B cell (primary cell): ENCODE measurements at regions of chr3 and their contacts with region 1.

Region 1: GRCh38 chr3:11335056-11335608 is 62.9 kb downstream of the ATG7 start:
- DNase-seq: peak; percentile 69
- ATAC-seq: peak; percentile 71
- H3K4me3 ChIP-seq: no peak overlapping the region
- H3K4me3 Mint-ChIP-seq: no peak overlapping the region
- H3K27ac ChIP-seq: no peak overlapping the region
- H3K27ac Mint-ChIP-seq: no peak overlapping the region
- H3K4me1 ChIP-seq: no peaks in the 10 kb centered on the region
- H3K4me1 Mint-ChIP-seq: no peaks in the 10 kb centered on the region
- H3K27me3 ChIP-seq: no peaks in the 10 kb centered on the region
- H3K27me3 Mint-ChIP-seq: no peaks in the 10 kb centered on the region
- CTCF ChIP-seq: peak; percentile 74

Region 2: DNA sequence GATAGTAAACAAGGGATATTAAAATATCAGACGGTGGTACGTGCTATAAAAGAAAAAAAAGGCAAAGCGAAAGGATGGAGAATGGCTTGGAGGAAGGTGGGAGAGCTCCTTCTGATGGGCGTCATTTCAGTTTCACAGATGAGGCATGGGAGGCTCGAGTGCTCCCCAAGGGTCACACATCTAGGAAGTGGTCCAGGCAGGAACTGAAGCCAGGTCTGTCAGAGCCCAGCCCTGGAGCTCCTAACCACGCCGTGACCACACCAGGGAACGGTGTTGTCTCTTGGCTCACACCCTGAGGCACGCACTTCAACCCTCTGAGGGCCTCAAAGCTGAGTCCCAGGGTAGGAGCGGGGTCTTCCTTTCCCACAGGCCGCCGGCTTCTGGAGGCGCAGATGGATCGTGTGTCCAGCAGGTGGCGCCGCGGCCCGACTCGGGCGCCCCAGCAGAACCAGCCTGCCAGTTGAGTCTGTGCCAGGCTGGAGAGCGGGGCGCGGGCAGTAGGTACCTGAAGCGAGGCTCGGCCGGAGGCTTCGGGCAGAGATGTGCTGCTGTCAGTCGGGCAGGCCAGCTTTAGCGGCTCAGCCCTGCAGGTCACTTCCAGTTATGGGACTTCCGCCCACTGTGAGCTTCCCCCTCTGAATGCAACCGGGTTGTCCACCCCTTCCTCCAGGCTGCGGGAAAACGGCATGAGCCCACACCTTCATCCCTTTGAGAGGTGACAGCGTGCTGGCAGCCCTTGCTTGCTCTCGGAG is 274.5 kb before region 1 on chr3:
- CTCF ChIA-PET with region 1: interaction called, 40 read pairs
- POLR2A ChIA-PET with region 1: no interaction called
- intact Hi-C with region 1: no loop called
- DNase-seq: peak; percentile 67
- ATAC-seq: peak; percentile 56
- H3K4me3 ChIP-seq: no peak overlapping the region
- H3K4me3 Mint-ChIP-seq: no peak overlapping the region
- H3K27ac ChIP-seq: no peak overlapping the region
- H3K27ac Mint-ChIP-seq: no peak overlapping the region
- H3K4me1 ChIP-seq: peaks cover 0 to 6% of the 10 kb centered on the region in 2 donors
- H3K4me1 Mint-ChIP-seq: peaks cover 4% of the 10 kb centered on the region
- H3K27me3 ChIP-seq: peaks cover 0 to 18% (median 8%) of the 10 kb centered on the region in 4 experiments
- H3K27me3 Mint-ChIP-seq: peaks cover 39% of the 10 kb centered on the region
- CTCF ChIP-seq: peak; percentile 83

Region 3: DNA sequence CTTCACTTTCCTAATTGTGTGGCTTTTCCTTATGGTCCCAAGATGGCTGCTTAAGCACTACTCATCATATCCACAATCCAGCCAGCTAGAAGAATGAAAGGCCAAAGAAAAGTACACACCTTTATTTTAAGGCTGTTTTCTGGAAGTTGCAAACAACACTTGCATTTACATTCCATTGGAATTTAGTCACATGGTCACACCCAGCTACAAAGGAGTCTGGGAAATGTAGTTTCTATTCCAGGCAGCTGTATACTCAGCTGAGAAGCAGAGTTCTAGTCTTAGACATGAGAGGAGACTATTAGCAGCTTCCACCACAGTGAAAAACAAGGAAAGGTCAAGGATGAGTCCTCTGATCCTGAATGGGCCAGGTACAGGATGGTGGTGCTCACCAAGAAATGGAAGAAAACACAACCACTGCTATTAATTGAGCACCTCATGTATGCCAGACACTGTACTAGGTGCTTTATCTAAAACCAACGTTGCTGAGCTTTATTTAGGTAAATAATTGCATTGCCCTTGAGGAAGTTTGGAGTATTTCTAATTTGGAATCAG is 90.9 kb before region 1 on chr3:
- CTCF ChIA-PET with region 1: interaction called, 241 read pairs
- POLR2A ChIA-PET with region 1: no interaction called
- intact Hi-C with region 1: no loop called
- DNase-seq: no peak
- ATAC-seq: no peak
- H3K4me3 ChIP-seq: no peak overlapping the region
- H3K4me3 Mint-ChIP-seq: no peak overlapping the region
- H3K27ac ChIP-seq: no peak overlapping the region
- H3K27ac Mint-ChIP-seq: no peak overlapping the region
- H3K4me1 ChIP-seq: no peaks in the 10 kb centered on the region
- H3K4me1 Mint-ChIP-seq: no peaks in the 10 kb centered on the region
- H3K27me3 ChIP-seq: peaks cover 0 to 3% (median 0%) of the 10 kb centered on the region in 4 experiments
- H3K27me3 Mint-ChIP-seq: peaks cover 4% of the 10 kb centered on the region
- CTCF ChIP-seq: no peak

Region 4: GRCh38 chr3:11288786-11289682 is 46.1 kb before region 1 on chr3:
- CTCF ChIA-PET with region 1: interaction called, 30 read pairs
- POLR2A ChIA-PET with region 1: interaction called, 5 read pairs
- intact Hi-C with region 1: loop called (anchors 2 kb)
- DNase-seq: peak; percentile 88
- ATAC-seq: peak; percentile 89
- H3K4me3 ChIP-seq: peak overlapping the region; percentile 6 to 63 (median 33)
- H3K4me3 Mint-ChIP-seq: peak overlapping the region; percentile 85
- H3K27ac ChIP-seq: peak overlapping the region; percentile 91 to 98
- H3K27ac Mint-ChIP-seq: peak overlapping the region; percentile 98
- H3K4me1 ChIP-seq: peaks cover 48 to 49% of the 10 kb centered on the region in 2 donors
- H3K4me1 Mint-ChIP-seq: peaks cover 57% of the 10 kb centered on the region
- H3K27me3 ChIP-seq: no peaks in the 10 kb centered on the region
- H3K27me3 Mint-ChIP-seq: no peaks in the 10 kb centered on the region
- CTCF ChIP-seq: no peak

Region 5: GRCh38 chr3:11323813-11324212 is 11.3 kb before region 1 on chr3:
- CTCF ChIA-PET with region 1: interaction called, 17 read pairs
- POLR2A ChIA-PET with region 1: no interaction called
- intact Hi-C with region 1: no loop called
- DNase-seq: no peak
- ATAC-seq: no peak
- H3K4me3 ChIP-seq: no peak overlapping the region
- H3K4me3 Mint-ChIP-seq: no peak overlapping the region
- H3K27ac ChIP-seq: no peak overlapping the region
- H3K27ac Mint-ChIP-seq: no peak overlapping the region
- H3K4me1 ChIP-seq: no peaks in the 10 kb centered on the region
- H3K4me1 Mint-ChIP-seq: no peaks in the 10 kb centered on the region
- H3K27me3 ChIP-seq: no peaks in the 10 kb centered on the region
- H3K27me3 Mint-ChIP-seq: no peaks in the 10 kb centered on the region
- CTCF ChIP-seq: no peak

Region 6: GRCh38 chr3:11651900-11652299 is 316.8 kb after region 1 on chr3:
- CTCF ChIA-PET with region 1: interaction called, 28 read pairs
- POLR2A ChIA-PET with region 1: no interaction called
- intact Hi-C with region 1: loop called (anchors 5 kb)
- DNase-seq: peak; percentile 61
- ATAC-seq: no peak
- H3K4me3 ChIP-seq: no peak overlapping the region
- H3K4me3 Mint-ChIP-seq: no peak overlapping the region
- H3K27ac ChIP-seq: no peak overlapping the region
- H3K27ac Mint-ChIP-seq: no peak overlapping the region
- H3K4me1 ChIP-seq: peaks cover 3 to 8% of the 10 kb centered on the region in 2 donors
- H3K4me1 Mint-ChIP-seq: peaks cover 11% of the 10 kb centered on the region
- H3K27me3 ChIP-seq: no peaks in the 10 kb centered on the region
- H3K27me3 Mint-ChIP-seq: no peaks in the 10 kb centered on the region
- CTCF ChIP-seq: peak; percentile 81

Region 7: DNA sequence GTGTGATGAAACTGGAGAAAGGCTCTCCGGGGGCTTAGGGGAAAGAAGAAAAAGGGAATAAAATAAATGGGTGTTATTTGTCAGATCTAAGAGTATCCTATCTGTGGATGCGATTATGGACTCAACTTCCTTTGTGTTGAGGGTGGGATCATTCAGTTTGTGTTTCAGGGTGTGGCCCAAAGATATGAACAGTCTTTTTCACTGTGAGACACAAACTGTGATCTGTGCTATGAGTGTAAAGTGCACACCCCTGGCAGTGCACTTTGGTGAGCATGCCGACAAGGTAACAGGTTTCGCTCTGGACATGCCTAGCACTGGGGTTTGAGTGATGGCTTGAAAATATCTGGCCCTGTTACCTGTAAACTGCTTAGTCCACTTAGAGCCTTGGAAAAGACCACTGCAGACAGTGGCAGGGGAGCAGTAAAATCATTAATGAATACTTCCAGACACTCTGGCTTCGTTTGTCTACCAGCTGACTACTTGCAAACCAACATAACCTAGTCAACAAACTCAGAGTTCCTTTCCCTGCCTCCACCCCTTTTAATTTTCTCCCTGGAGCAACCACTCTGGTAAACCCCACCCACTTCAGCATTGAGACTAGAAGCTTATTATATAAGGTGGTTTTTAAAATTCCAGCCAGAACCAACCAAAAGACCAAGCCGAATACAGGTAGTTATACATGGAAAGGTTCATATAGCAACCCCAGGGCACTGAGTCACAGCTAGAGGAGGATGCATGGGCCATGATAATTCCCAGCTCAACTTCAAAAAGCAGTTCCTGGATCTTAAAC is 456.4 kb after region 1 on chr3:
- CTCF ChIA-PET with region 1: no interaction called
- POLR2A ChIA-PET with region 1: no interaction called
- intact Hi-C with region 1: no loop called
- DNase-seq: no peak
- ATAC-seq: no peak
- H3K4me3 ChIP-seq: no peak overlapping the region
- H3K4me3 Mint-ChIP-seq: no peak overlapping the region
- H3K27ac ChIP-seq: no peak overlapping the region
- H3K27ac Mint-ChIP-seq: no peak overlapping the region
- H3K4me1 ChIP-seq: no peaks in the 10 kb centered on the region
- H3K4me1 Mint-ChIP-seq: no peaks in the 10 kb centered on the region
- H3K27me3 ChIP-seq: no peaks in the 10 kb centered on the region
- H3K27me3 Mint-ChIP-seq: no peaks in the 10 kb centered on the region
- CTCF ChIP-seq: no peak